Activated CD4-positive, alpha-beta memory T cell treated with anti-CD3 and anti-CD28 coated beads for 36 hours (primary cell): ENCODE measurements at regions of chr9 and their contacts with region 1.

Region 1: DNA sequence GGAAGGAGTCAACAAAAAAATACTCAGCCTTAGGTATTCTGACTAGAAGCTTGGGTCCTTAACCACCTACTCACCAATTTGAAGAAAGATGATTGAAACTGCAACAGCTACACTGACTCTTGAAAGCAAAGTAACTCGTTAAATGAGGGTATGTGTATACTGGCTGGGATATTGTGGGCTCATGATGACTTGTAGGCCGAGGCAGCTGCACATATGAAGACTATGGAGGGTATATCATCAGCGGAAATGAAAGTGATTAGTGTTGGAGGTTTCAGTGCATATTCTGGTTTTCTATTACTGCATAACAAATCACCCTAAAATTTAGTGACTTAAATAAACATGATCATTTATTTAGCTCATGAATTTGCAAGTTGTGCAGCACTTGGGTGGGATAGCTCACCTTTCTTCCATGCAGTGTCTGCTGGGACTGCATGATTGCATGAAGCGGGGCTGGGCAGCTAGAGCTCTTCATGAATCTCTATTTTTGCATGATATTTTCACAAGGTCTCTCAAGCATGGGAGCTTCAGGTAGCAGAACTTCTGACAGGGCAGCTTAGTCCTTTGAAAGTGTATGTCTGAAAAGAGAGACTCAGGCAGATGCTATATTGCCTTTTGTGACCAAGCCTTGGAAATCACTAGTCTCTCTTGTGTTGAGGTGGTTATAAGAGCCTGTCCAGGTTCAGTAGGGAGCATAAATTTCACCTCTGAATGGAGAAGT is 96.1 kb upstream of the CDKN2B start:
- DNase-seq: peak; percentile 60
- H3K4me3 Mint-ChIP-seq: no peak overlapping the region
- H3K27ac Mint-ChIP-seq: no peak overlapping the region
- H3K4me1 Mint-ChIP-seq: peaks cover 29% of the 10 kb centered on the region
- H3K27me3 Mint-ChIP-seq: peaks cover 32% of the 10 kb centered on the region

Region 2: GRCh38 chr9:21688108-21689102 is 416.8 kb before region 1 on chr9:
- CTCF ChIA-PET with region 1: no interaction called
- POLR2A ChIA-PET with region 1: no interaction called
- intact Hi-C with region 1: loop called (anchors 10 kb)
- DNase-seq: no peak
- H3K4me3 Mint-ChIP-seq: no peak overlapping the region
- H3K27ac Mint-ChIP-seq: no peak overlapping the region
- H3K4me1 Mint-ChIP-seq: peaks cover 40% of the 10 kb centered on the region
- H3K27me3 Mint-ChIP-seq: no peaks in the 10 kb centered on the region

Region 3: GRCh38 chr9:22037954-22038690 is 67.0 kb before region 1 on chr9:
- CTCF ChIA-PET with region 1: interaction called, 6 read pairs
- POLR2A ChIA-PET with region 1: no interaction called
- intact Hi-C with region 1: loop called (anchors 5 kb)
- DNase-seq: no peak
- H3K4me3 Mint-ChIP-seq: no peak overlapping the region
- H3K27ac Mint-ChIP-seq: no peak overlapping the region
- H3K4me1 Mint-ChIP-seq: peaks cover 16% of the 10 kb centered on the region
- H3K27me3 Mint-ChIP-seq: peaks cover 7% of the 10 kb centered on the region

Region 4: GRCh38 chr9:22079873-22080341 is 25.3 kb before region 1 on chr9:
- CTCF ChIA-PET with region 1: interaction called, 9 read pairs
- POLR2A ChIA-PET with region 1: interaction called, 14 read pairs
- intact Hi-C with region 1: loop called (anchors 1 kb)
- DNase-seq: peak; percentile 76
- H3K4me3 Mint-ChIP-seq: peak overlapping the region; percentile 24
- H3K27ac Mint-ChIP-seq: peak overlapping the region; percentile 42
- H3K4me1 Mint-ChIP-seq: peaks cover 43% of the 10 kb centered on the region
- H3K27me3 Mint-ChIP-seq: peaks cover 52% of the 10 kb centered on the region

Region 5: DNA sequence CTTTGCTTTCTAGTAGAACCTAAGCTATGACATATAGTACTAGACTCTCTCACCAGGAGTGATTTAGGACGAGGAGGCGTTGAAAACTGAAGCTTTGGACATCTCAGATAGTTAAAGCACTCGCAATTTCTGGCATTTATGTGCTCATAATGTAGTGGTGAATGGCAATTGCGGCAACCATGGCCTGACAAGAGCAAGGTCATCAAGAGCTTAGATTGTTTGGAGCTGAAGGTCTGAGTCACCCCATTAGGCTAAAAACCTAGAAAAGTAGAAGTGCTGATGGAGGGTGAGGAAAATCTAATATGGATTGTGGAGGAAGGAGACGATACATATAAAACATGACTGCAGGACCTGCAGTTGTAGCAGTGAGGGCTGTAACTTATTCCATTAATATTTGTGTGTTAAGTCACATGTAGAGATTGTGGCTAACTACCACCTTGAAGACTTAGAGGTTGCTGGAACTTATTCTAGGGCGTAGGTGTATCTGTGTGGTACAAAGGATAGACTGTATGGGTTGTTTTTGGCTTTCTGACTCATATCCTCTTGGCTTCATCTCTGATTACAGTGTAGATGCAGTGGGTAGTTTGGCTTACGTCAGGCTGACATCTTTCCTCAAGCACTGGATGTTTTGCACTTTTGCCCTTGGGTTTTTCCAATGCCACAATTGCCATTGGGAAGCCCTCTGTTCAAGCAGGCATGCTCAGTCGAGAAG is 42.8 kb after region 1 on chr9:
- CTCF ChIA-PET with region 1: interaction called, 4 read pairs
- POLR2A ChIA-PET with region 1: interaction called, 5 read pairs
- intact Hi-C with region 1: loop called (anchors 1 kb)
- DNase-seq: peak; percentile 24
- H3K4me3 Mint-ChIP-seq: no peak overlapping the region
- H3K27ac Mint-ChIP-seq: no peak overlapping the region
- H3K4me1 Mint-ChIP-seq: peaks cover 24% of the 10 kb centered on the region
- H3K27me3 Mint-ChIP-seq: peaks cover 23% of the 10 kb centered on the region

Region 6: GRCh38 chr9:22211593-22212360 is 106.6 kb after region 1 on chr9:
- CTCF ChIA-PET with region 1: interaction called, 3 read pairs
- POLR2A ChIA-PET with region 1: interaction called, 4 read pairs
- intact Hi-C with region 1: loop called (anchors 1 kb)
- DNase-seq: no peak
- H3K4me3 Mint-ChIP-seq: no peak overlapping the region
- H3K27ac Mint-ChIP-seq: no peak overlapping the region
- H3K4me1 Mint-ChIP-seq: peaks cover 32% of the 10 kb centered on the region
- H3K27me3 Mint-ChIP-seq: no peaks in the 10 kb centered on the region

Region 7: GRCh38 chr9:22452415-22453010 is 347.3 kb after region 1 on chr9:
- CTCF ChIA-PET with region 1: no interaction called
- POLR2A ChIA-PET with region 1: no interaction called
- intact Hi-C with region 1: loop called (anchors 10 kb)
- DNase-seq: peak; percentile 60
- H3K4me3 Mint-ChIP-seq: no peak overlapping the region
- H3K27ac Mint-ChIP-seq: no peak overlapping the region
- H3K4me1 Mint-ChIP-seq: peaks cover 6% of the 10 kb centered on the region
- H3K27me3 Mint-ChIP-seq: peaks cover 26% of the 10 kb centered on the region